ENCODE measurements at regions of chr19 and their contacts with region 1.

Region 1: GRCh38 chr19:19643158-19644053 is at the start of gene GMIP:
- DNase-seq: peak; percentile 82 to 87
- H3K4me3 ChIP-seq: peak within 1 kb of the TSS; percentile 52
- H3K4me3 Mint-ChIP-seq: peak within 1 kb of the TSS; percentile 87
- H3K27ac Mint-ChIP-seq: peak within 1 kb of the TSS; percentile 95
- H3K4me1 ChIP-seq: 0 out of 2 replicates have a peak, but pooled peaks cover 3% of the 10 kb centered on the region
- H3K4me1 Mint-ChIP-seq: peaks cover 7% of the 10 kb centered on the region
- H3K27me3 ChIP-seq: no peaks in the 10 kb centered on the region
- H3K27me3 Mint-ChIP-seq: no peaks in the 10 kb centered on the region
- CTCF ChIP-seq: peak; percentile 76 to 83
- total RNA-seq, gene GMIP: 8.6 and 10.4 TPM in 2 replicates

Region 2: GRCh38 chr19:19531951-19532805 is 111.2 kb before region 1 on chr19:
- CTCF ChIA-PET with region 1: interaction called, 15 read pairs
- POLR2A ChIA-PET with region 1: no interaction called
- intact Hi-C with region 1: loop called (anchors 1 kb)
- DNase-seq: peak; percentile 71 to 85
- H3K4me3 ChIP-seq: no peak overlapping the region
- H3K4me3 Mint-ChIP-seq: no peak overlapping the region
- H3K27ac Mint-ChIP-seq: no peak overlapping the region
- H3K4me1 ChIP-seq: no peaks in the 10 kb centered on the region
- H3K4me1 Mint-ChIP-seq: peaks cover 10% of the 10 kb centered on the region
- H3K27me3 ChIP-seq: no peaks in the 10 kb centered on the region
- H3K27me3 Mint-ChIP-seq: no peaks in the 10 kb centered on the region
- CTCF ChIP-seq: peak; percentile 83 to 96